OCI-LY7 (cell line): ENCODE measurements at regions of chr11 and their contacts with region 1.

Region 1: GRCh38 chr11:33294224-33294623 is 37.0 kb downstream of the HIPK3 start:
- DNase-seq: no peak
- H3K4me3 ChIP-seq: no peak overlapping the region
- H3K27ac ChIP-seq: no peak overlapping the region
- H3K4me1 ChIP-seq: peaks cover 5% of the 10 kb centered on the region
- CTCF ChIP-seq: no peak

Region 2: GRCh38 chr11:33315822-33316221 is 21.6 kb after region 1 on chr11:
- CTCF ChIA-PET with region 1: no interaction called
- POLR2A ChIA-PET with region 1: interaction called, 4 read pairs
- intact Hi-C with region 1: loop called (anchors 2 kb)
- DNase-seq: no peak
- H3K4me3 ChIP-seq: no peak overlapping the region
- H3K27ac ChIP-seq: no peak overlapping the region
- H3K4me1 ChIP-seq: no peaks in the 10 kb centered on the region
- CTCF ChIP-seq: no peak